CD4-positive, alpha-beta T cell (primary cell): ENCODE measurements at regions of chr2 and their contacts with region 1.

Region 1: GRCh38 chr2:189762551-189763298 is at the start of gene OSGEPL1:
- DNase-seq: peak; percentile 84 to 96 (median 92)
- ATAC-seq: peak; percentile 92
- H3K4me3 ChIP-seq: peak within 1 kb of the TSS; percentile 78
- H3K4me3 Mint-ChIP-seq: peak within 1 kb of the TSS; percentile 100
- H3K27ac ChIP-seq: peak within 1 kb of the TSS; percentile 87 to 91
- H3K27ac Mint-ChIP-seq: peak within 1 kb of the TSS; percentile 100
- H3K4me1 ChIP-seq: peaks cover 9% of the 10 kb centered on the region
- H3K4me1 Mint-ChIP-seq: peaks cover 17% of the 10 kb centered on the region
- H3K27me3 ChIP-seq: no peaks in the 10 kb centered on the region
- H3K27me3 Mint-ChIP-seq: no peaks in the 10 kb centered on the region
- CTCF ChIP-seq: peak; percentile 73
- total RNA-seq, gene OSGEPL1: 3.3 to 3.7 TPM

Region 2: DNA sequence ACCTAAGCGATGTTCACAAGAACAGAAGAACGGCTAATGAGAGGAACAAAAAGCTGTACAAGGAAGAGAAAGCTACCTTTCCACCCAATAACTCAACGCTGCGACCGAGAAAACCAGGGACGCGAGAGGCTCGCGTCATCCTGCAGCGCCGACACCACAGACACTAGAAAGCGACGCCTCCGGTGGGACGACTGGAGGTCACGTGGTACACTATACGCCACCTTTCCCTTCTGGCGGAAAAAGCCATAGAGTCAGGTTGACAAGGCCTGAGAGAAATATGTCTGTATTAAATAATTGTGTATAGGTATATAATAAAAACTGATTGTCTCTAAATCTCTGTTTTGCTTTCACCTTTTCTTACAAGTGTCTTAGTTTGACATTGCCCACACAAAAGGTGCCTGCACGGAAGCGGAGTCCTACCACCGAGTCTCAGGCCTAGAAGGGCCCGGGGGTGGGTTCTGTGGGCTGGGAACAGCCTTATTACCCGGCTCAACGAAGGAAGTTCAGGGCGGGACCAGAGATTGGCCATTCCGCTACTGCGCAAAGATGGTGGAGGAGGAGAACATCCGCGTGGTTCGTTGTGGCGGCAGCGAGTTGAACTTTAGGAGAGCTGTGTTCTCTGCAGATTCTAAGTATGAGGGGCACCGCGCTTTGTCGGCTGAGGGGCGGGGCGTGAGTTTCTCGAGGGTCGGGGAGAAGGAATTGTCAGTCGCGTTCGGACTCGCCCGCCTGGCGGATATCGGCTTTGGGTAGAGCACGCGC is 321.6 kb before region 1 on chr2 and contains the start of gene WDR75:
- CTCF ChIA-PET with region 1: interaction called, 3 read pairs
- POLR2A ChIA-PET with region 1: interaction called, 18 read pairs
- intact Hi-C with region 1: no loop called
- DNase-seq: peak; percentile 85 to 96 (median 90)
- ATAC-seq: peak; percentile 93
- H3K4me3 ChIP-seq: peak within 1 kb of the TSS; percentile 78
- H3K4me3 Mint-ChIP-seq: no peak within 1 kb of the TSS
- H3K27ac ChIP-seq: peak within 1 kb of the TSS; percentile 90 to 97
- H3K27ac Mint-ChIP-seq: peak within 1 kb of the TSS; percentile 97
- H3K4me1 ChIP-seq: peaks cover 21% of the 10 kb centered on the region
- H3K4me1 Mint-ChIP-seq: peaks cover 16% of the 10 kb centered on the region
- H3K27me3 ChIP-seq: no peaks in the 10 kb centered on the region
- H3K27me3 Mint-ChIP-seq: no peaks in the 10 kb centered on the region
- CTCF ChIP-seq: no peak
- total RNA-seq, gene WDR75: 38.1 to 45.3 TPM

Region 3: DNA sequence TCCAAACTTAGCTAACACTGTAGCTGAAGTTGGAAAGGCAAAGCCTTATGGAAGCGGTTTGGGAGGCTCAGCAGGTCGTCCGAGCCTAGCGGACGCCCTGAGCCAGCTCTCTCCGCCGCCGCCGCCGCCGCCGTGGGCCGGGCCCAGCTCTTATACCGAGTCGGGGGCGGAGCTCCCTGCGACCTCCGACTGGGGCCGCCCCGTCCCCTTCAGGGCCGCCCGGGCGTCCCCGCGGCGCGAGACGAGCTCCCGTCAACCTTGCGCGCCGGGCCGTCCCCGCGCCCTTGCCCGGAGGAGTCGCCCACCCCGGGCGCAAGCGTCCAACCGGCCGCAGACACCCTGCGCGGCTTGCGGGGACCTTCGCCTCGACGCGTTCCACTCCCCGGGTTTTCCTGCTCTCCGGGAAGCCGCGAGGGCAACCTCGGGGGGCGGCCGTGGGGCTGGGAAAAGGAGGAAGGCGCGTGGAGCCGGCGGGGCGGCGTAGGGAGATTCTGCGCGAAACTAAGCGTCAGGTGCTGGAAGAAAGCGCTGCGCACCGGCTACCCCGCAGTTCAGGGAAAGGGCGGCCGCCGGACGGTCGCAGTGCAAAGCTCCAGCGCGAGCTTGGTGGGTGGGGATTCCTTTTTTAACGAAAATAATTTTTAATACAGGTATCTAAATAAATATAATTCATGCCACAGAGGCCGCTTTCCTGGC is 181.9 kb before region 1 on chr2 and contains the start of gene SLC40A1:
- CTCF ChIA-PET with region 1: interaction called, 3 read pairs
- POLR2A ChIA-PET with region 1: interaction called, 17 read pairs
- intact Hi-C with region 1: no loop called
- DNase-seq: peak; percentile 44 to 88 (median 69)
- ATAC-seq: peak; percentile 96
- H3K4me3 ChIP-seq: peak within 1 kb of the TSS; percentile 79
- H3K4me3 Mint-ChIP-seq: peak within 1 kb of the TSS; percentile 95
- H3K27ac ChIP-seq: peak within 1 kb of the TSS; percentile 46 to 66
- H3K27ac Mint-ChIP-seq: peak within 1 kb of the TSS; percentile 83
- H3K4me1 ChIP-seq: peaks cover 21% of the 10 kb centered on the region
- H3K4me1 Mint-ChIP-seq: peaks cover 56% of the 10 kb centered on the region
- H3K27me3 ChIP-seq: no peaks in the 10 kb centered on the region
- H3K27me3 Mint-ChIP-seq: peaks cover 9% of the 10 kb centered on the region
- CTCF ChIP-seq: no peak
- total RNA-seq, gene SLC40A1: 7.4 to 8.2 TPM

Region 4: GRCh38 chr2:189751080-189751658 is 11.6 kb before region 1 on chr2:
- CTCF ChIA-PET with region 1: interaction called, 10 read pairs
- POLR2A ChIA-PET with region 1: interaction called, 18 read pairs
- intact Hi-C with region 1: no loop called
- DNase-seq: peak in 11 of 14 experiments; percentile 3 to 70 (median 24)
- ATAC-seq: peak; percentile 87
- H3K4me3 ChIP-seq: no peak overlapping the region
- H3K4me3 Mint-ChIP-seq: no peak overlapping the region
- H3K27ac ChIP-seq: no peak overlapping the region
- H3K27ac Mint-ChIP-seq: peak overlapping the region; percentile 0
- H3K4me1 ChIP-seq: no peaks in the 10 kb centered on the region
- H3K4me1 Mint-ChIP-seq: no peaks in the 10 kb centered on the region
- H3K27me3 ChIP-seq: no peaks in the 10 kb centered on the region
- H3K27me3 Mint-ChIP-seq: no peaks in the 10 kb centered on the region
- CTCF ChIP-seq: peak; percentile 53

Region 5: DNA sequence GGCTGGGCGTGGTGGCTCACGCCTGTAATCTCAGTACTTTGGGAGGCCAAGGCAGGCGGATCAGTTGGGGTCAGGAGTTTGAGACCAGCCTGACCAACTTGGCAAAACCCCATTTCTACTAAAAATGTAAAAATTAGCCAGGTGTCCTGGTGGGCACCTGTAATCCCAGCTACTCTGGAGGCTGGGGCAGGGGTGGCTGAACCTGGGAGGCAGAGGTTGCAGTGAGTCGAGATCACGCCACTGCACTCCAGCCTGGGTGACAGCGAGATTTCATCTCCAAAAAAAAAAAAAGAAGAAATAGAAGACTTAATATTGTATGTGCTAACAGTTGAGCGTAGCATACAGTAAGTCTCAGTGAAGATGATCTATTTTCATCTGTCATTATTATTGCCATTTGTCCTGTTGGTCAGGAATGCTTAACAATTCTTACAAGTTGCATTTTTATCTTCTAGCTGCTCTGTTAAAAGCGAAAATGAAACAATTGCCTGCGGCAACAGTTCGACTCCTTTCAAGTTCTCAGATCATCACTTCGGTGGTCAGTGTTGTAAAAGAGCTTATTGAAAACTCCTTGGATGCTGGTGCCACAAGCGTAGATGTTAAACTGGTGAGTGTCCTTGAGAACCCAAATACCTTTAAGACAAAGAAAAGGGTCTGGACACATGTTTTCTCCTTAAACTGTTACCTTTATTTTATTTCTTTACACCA is 28.8 kb after region 1 on chr2:
- CTCF ChIA-PET with region 1: interaction called, 23 read pairs
- POLR2A ChIA-PET with region 1: interaction called, 11 read pairs
- intact Hi-C with region 1: no loop called
- DNase-seq: peak in 3 of 14 experiments; percentile 57 to 75 (median 65)
- ATAC-seq: no peak
- H3K4me3 ChIP-seq: peak overlapping the region; percentile 42
- H3K4me3 Mint-ChIP-seq: peak overlapping the region; percentile 65
- H3K27ac ChIP-seq: peak overlapping the region in 1 of 2 donors; percentile 35
- H3K27ac Mint-ChIP-seq: peak overlapping the region; percentile 36
- H3K4me1 ChIP-seq: no peaks in the 10 kb centered on the region
- H3K4me1 Mint-ChIP-seq: peaks cover 9% of the 10 kb centered on the region
- H3K27me3 ChIP-seq: no peaks in the 10 kb centered on the region
- H3K27me3 Mint-ChIP-seq: no peaks in the 10 kb centered on the region
- CTCF ChIP-seq: no peak

Region 6: DNA sequence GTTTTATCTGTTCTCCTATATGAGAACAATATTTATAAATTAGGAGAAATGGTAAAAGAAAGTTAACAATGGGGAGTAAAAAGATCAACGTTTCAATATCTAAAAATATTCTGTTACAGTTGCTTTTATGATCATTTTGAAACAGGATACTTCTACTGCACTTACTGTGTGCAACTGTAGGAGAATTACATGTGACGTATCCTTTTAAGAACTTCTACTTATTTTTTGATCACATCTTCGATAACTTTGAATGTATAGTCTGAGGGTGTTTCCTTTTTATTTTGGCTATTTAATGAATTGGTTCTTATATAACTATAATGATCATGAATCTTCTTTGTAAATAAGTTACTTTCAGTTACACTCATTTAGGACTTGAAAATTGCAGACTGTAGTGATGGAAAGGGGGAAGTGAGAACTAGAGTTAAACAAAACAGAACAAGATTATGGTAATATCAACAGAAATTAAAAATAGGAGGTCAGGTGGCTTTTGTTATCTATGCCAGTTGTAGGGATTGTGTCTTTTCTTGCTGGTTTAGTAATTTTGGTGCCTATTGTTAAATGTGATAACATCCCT is 189.9 kb after region 1 on chr2:
- CTCF ChIA-PET with region 1: no interaction called
- POLR2A ChIA-PET with region 1: no interaction called
- intact Hi-C with region 1: no loop called
- DNase-seq: no peak
- ATAC-seq: no peak
- H3K4me3 ChIP-seq: no peak overlapping the region
- H3K4me3 Mint-ChIP-seq: no peak overlapping the region
- H3K27ac ChIP-seq: no peak overlapping the region
- H3K27ac Mint-ChIP-seq: no peak overlapping the region
- H3K4me1 ChIP-seq: no peaks in the 10 kb centered on the region
- H3K4me1 Mint-ChIP-seq: no peaks in the 10 kb centered on the region
- H3K27me3 ChIP-seq: no peaks in the 10 kb centered on the region
- H3K27me3 Mint-ChIP-seq: peaks cover 5% of the 10 kb centered on the region
- CTCF ChIP-seq: no peak